ENCODE measurements at regions of chr16 and their contacts with region 1.

Region 1: GRCh38 chr16:72501739-72502593 is 330.0 kb upstream of the PMFBP1 start:
- DNase-seq: peak; percentile 63
- ATAC-seq: peak; percentile 68
- H3K4me3 Mint-ChIP-seq: no peak overlapping the region
- H3K27ac Mint-ChIP-seq: no peak overlapping the region
- H3K4me1 Mint-ChIP-seq: no peaks in the 10 kb centered on the region
- H3K27me3 Mint-ChIP-seq: no peaks in the 10 kb centered on the region

Region 2: GRCh38 chr16:72530444-72530843 is 28.5 kb after region 1 on chr16:
- CTCF ChIA-PET with region 1: no interaction called
- POLR2A ChIA-PET with region 1: no interaction called
- DNase-seq: no peak
- ATAC-seq: no peak
- H3K4me3 Mint-ChIP-seq: no peak overlapping the region
- H3K27ac Mint-ChIP-seq: no peak overlapping the region
- H3K4me1 Mint-ChIP-seq: no peaks in the 10 kb centered on the region
- H3K27me3 Mint-ChIP-seq: no peaks in the 10 kb centered on the region

Region 3: DNA sequence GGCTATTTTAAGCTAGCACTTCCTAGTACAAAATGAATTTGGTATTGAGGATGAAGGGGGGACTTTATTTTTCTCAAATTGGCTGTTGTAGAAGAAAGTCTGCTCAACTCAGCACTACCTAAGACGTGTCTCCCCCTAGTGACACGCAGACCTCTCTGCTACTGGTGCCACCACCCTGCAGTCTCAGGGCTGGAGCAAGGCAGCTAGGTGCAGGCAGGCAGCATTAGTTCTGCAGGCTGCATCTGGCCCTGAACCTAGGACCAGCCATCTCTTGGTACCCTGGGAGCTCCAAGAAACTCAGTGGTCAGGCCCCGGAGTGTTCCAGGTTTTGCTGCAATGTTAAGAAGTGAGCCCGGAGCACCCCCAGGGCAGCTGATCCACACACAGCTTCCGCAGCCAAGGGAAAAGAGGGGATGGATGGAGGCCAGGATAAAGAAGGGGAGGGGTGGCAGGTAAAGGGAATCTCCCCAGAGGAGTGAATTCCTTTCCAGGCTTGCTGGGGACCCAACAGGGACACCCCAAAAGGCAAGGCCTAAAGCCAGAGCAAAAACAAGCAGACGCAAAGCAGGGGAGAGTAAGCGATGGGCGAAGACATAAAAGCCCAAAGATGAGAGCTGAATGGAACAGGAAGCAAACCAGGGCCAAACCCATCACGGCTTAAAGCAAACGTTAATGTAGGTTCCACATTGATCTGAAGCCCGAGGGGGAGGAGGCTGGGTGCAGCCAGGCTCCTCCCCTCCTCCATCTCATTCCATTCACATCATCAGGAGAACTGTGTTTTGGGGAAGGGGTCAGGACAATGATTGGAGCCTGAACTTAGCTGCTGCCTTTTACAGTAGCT is 345.4 kb after region 1 on chr16:
- CTCF ChIA-PET with region 1: interaction called, 10 read pairs
- POLR2A ChIA-PET with region 1: no interaction called
- DNase-seq: peak; percentile 67
- ATAC-seq: peak; percentile 82
- H3K4me3 Mint-ChIP-seq: no peak overlapping the region
- H3K27ac Mint-ChIP-seq: no peak overlapping the region
- H3K4me1 Mint-ChIP-seq: peaks cover 55% of the 10 kb centered on the region
- H3K27me3 Mint-ChIP-seq: peaks cover 12% of the 10 kb centered on the region

Measured in activated CD8-positive, alpha-beta T cell treated with anti-CD3 and anti-CD28 coated beads, Interleukin-2, amount 10 ng/mL, durations not matched to agents 7 days and 5 days (primary cell).